Mucosa of descending colon (tissue), 3 donors: ENCODE measurements at regions of chr2 and their contacts with region 1.

Region 1: GRCh38 chr2:88669371-88670214 is 21.9 kb upstream of the RPIA start:
- DNase-seq: peak in 1 of 3 donors; percentile 50
- ATAC-seq: peak; percentile 77
- H3K4me3 ChIP-seq: no peak overlapping the region
- H3K4me1 ChIP-seq: no peaks in the 10 kb centered on the region
- CTCF ChIP-seq: peak; percentile 20

Region 2: GRCh38 chr2:88590998-88591613 is 78.5 kb before region 1 on chr2:
- intact Hi-C with region 1: loop called (anchors 1 to 5 kb)
- DNase-seq: peak in 1 of 3 donors; percentile 80
- ATAC-seq: peak; percentile 89
- H3K4me3 ChIP-seq: no peak overlapping the region
- H3K4me1 ChIP-seq: no peaks in the 10 kb centered on the region
- CTCF ChIP-seq: peak; percentile 65